ENCODE measurements at regions of chr1 and their contacts with region 1.

Region 1: GRCh38 chr1:160291248-160292220 is 6.6 kb upstream of the PEX19 start:
- DNase-seq: peak in 1 of 2 experiments; percentile 62
- H3K4me3 ChIP-seq: no peak overlapping the region
- H3K27ac ChIP-seq: no peak overlapping the region
- H3K4me1 ChIP-seq: no peaks in the 10 kb centered on the region
- H3K27me3 ChIP-seq: no peaks in the 10 kb centered on the region
- CTCF ChIP-seq: peak; percentile 69 to 94 (median 71)
- EP300 ChIP-seq: no peak
- POLR2A ChIP-seq: no peak
- RAD21 ChIP-seq: peak; percentile 58 to 59

Region 2: GRCh38 chr1:160108888-160109662 is 182.5 kb before region 1 on chr1:
- CTCF ChIA-PET with region 1: interaction called, 17 read pairs
- POLR2A ChIA-PET with region 1: no interaction called
- DNase-seq: peak in 1 of 2 experiments; percentile 69
- H3K4me3 ChIP-seq: no peak overlapping the region
- H3K27ac ChIP-seq: no peak overlapping the region
- H3K4me1 ChIP-seq: peaks cover 8 to 32% (median 20%) of the 10 kb centered on the region in 4 experiments
- H3K27me3 ChIP-seq: no peaks in the 10 kb centered on the region; a peak in 1 of 7 replicates
- CTCF ChIP-seq: peak; percentile 4 to 73 (median 44)
- EP300 ChIP-seq: peak in 1 of 2 experiments; percentile 49; a peak in 1 of 3 replicates
- POLR2A ChIP-seq: no peak
- RAD21 ChIP-seq: peak; percentile 24 to 35; a peak in 3 of 4 replicates

Region 3: DNA sequence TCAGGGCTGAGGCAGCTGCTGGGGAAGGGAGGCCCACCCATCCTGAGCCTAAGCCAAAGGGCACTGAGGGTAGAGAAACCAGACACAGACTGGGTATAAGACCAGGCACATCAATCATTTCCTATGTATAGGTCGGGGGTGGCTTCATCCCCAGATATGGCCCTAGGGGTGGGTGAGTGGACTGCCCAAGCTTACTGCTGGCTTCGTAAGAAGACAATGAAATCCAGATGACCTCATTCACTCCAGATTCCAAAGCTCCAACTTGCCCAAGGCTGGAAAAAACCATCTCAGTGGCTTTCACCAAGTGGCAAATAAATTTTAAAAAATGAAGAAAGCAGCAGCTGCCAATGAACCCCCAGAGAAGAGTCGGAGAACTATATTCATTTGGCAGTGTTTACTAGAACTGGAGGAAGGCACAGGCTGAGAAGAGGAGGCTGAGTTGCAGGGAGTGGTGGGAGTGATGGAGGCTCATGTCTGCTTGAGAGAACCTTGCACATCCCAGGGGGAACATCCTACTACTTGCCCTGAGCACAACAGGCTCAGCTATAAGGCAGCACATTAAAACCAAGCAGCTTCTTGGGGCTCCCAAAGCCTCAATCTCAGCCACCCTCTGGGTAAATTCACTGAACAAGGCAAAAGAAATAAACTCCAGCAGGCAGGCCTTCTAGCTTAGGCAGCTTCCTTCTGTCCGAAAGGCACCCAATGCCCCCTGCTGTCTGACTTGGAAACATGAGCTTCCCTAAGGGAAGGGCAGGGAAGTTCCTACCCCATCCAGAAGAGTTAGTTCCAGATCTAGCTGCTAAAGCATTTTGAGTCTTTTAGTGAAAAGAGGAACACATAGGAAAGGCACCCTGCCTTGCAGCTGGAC is 72.2 kb before region 1 on chr1:
- CTCF ChIA-PET with region 1: interaction called, 19 read pairs
- POLR2A ChIA-PET with region 1: interaction called, 4 read pairs
- DNase-seq: no peak
- H3K4me3 ChIP-seq: no peak overlapping the region
- H3K27ac ChIP-seq: no peak overlapping the region
- H3K4me1 ChIP-seq: no peaks in the 10 kb centered on the region
- H3K27me3 ChIP-seq: no peaks in the 10 kb centered on the region
- CTCF ChIP-seq: peak; percentile 35 to 66 (median 48)
- EP300 ChIP-seq: no peak
- POLR2A ChIP-seq: no peak
- RAD21 ChIP-seq: peak; percentile 66 to 80

Region 4: GRCh38 chr1:160251687-160252526 is 39.6 kb before region 1 on chr1:
- CTCF ChIA-PET with region 1: interaction called, 22 read pairs
- POLR2A ChIA-PET with region 1: interaction called, 5 read pairs
- DNase-seq: no peak
- H3K4me3 ChIP-seq: no peak overlapping the region
- H3K27ac ChIP-seq: no peak overlapping the region
- H3K4me1 ChIP-seq: no peaks in the 10 kb centered on the region; a peak in 1 of 7 replicates
- H3K27me3 ChIP-seq: no peaks in the 10 kb centered on the region
- CTCF ChIP-seq: peak in 2 of 3 experiments; percentile 76 to 78; a peak in 3 of 4 replicates
- EP300 ChIP-seq: no peak
- POLR2A ChIP-seq: no peak
- RAD21 ChIP-seq: peak; percentile 84 to 91

Region 5: DNA sequence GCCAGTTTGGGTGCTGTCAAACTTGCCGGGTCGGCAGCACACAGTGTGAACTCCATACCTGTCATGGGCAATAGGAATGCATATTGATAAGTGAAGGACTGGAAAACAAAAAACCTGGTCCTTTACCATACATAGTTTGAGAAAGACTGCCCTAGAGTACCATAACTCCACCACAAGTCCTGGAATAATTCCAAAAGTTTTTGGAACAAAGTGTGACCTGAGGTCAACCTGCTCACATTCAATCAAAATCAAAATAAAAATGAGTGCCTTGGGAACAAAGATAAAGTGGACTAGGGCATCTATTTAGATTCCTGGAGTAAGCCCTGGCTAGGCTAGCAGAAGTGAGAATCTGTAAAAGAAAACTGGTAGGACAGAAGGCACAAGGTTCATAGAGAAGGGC is 14.2 kb before region 1 on chr1:
- CTCF ChIA-PET with region 1: interaction called, 54 read pairs
- POLR2A ChIA-PET with region 1: interaction called, 79 read pairs
- DNase-seq: no peak
- H3K4me3 ChIP-seq: no peak overlapping the region
- H3K27ac ChIP-seq: no peak overlapping the region
- H3K4me1 ChIP-seq: no peaks in the 10 kb centered on the region
- H3K27me3 ChIP-seq: no peaks in the 10 kb centered on the region
- CTCF ChIP-seq: no peak
- EP300 ChIP-seq: no peak
- POLR2A ChIP-seq: no peak
- RAD21 ChIP-seq: no peak

Region 6: DNA sequence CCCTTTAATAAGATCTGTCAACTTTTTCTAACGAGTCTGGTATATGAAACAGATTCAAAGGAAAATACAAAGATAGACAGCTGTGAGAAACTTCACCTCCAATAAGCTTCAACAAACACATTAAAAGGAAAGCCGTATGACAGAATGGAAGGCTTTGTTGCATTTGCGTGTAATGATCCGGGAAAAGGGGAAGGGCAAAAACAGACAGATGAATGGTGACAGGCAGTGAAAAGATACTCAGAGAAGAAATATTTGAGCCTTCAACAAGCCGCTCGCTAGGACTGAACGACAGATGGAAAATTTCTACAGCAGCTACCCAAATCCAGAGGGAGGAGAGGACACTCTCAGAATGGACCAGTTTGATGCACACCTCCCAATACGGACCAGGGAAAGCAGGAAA is 36.6 kb after region 1 on chr1:
- CTCF ChIA-PET with region 1: interaction called, 55 read pairs
- POLR2A ChIA-PET with region 1: interaction called, 3 read pairs
- DNase-seq: no peak
- H3K4me3 ChIP-seq: no peak overlapping the region
- H3K27ac ChIP-seq: no peak overlapping the region
- H3K4me1 ChIP-seq: no peaks in the 10 kb centered on the region
- H3K27me3 ChIP-seq: no peaks in the 10 kb centered on the region
- CTCF ChIP-seq: no peak
- EP300 ChIP-seq: no peak
- POLR2A ChIP-seq: no peak
- RAD21 ChIP-seq: no peak

Region 7: GRCh38 chr1:160376525-160377131 is 85.1 kb after region 1 on chr1:
- CTCF ChIA-PET with region 1: interaction called, 24 read pairs
- POLR2A ChIA-PET with region 1: interaction called, 4 read pairs
- DNase-seq: no peak
- H3K4me3 ChIP-seq: peak overlapping the region in 1 of 4 experiments; percentile 30; a peak in 1 of 8 replicates
- H3K27ac ChIP-seq: no peak overlapping the region
- H3K4me1 ChIP-seq: peaks cover 8 to 21% (median 16%) of the 10 kb centered on the region in 4 experiments
- H3K27me3 ChIP-seq: no peaks in the 10 kb centered on the region
- CTCF ChIP-seq: peak; percentile 20 to 100 (median 94)
- EP300 ChIP-seq: no peak
- POLR2A ChIP-seq: no peak
- RAD21 ChIP-seq: peak; percentile 98 to 99

Region 8: GRCh38 chr1:160813215-160813614 is 521.7 kb after region 1 on chr1:
- CTCF ChIA-PET with region 1: no interaction called
- POLR2A ChIA-PET with region 1: no interaction called
- DNase-seq: no peak
- H3K4me3 ChIP-seq: no peak overlapping the region
- H3K27ac ChIP-seq: no peak overlapping the region
- H3K4me1 ChIP-seq: peaks cover 0 to 7% (median 4%) of the 10 kb centered on the region in 4 experiments; a peak in 4 of 7 replicates
- H3K27me3 ChIP-seq: no peaks in the 10 kb centered on the region; a peak in 1 of 7 replicates
- CTCF ChIP-seq: no peak
- EP300 ChIP-seq: no peak
- POLR2A ChIP-seq: no peak
- RAD21 ChIP-seq: no peak

Measured in H1 (cell line).